ENCODE measurements at regions of chr12 and their contacts with region 1.

Region 1: DNA sequence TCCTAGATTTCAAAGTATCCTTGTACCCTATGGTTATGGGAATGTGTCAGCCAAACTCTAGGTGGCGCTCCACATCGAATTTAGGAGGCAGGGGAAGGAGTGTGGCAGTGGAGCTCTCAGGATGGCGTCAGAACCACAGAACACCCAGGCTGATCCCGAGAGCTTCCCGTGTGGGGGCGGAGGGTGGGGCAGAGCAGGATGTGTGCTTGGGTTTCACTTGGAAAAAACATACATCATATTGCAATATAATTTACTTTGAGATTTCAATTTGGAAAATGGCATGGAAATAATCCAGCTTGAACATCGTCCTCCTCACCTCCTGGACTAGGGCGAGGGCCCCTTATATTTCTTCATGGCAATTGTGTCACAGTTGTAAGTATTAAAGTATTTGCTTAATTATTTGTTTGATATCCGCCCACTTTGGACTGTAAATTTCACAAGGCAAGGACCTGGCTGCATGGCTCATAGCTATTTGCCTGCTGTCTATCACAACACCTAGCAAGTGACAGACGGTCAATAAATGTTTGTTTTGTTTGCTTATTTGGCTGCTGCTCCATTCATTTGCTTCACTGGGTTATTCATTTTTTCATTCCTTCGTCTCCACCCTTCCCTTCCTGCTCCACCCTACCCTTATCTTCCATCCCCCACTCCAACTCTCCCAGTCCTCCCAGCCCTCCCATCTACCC is 221.5 kb upstream of the HMGA2 start:
- DNase-seq: peak; percentile 97
- H3K4me3 Mint-ChIP-seq: peak overlapping the region; percentile 81
- H3K27ac Mint-ChIP-seq: peak overlapping the region; percentile 42
- H3K4me1 Mint-ChIP-seq: peaks cover 46% of the 10 kb centered on the region
- H3K27me3 Mint-ChIP-seq: no peaks in the 10 kb centered on the region
- CTCF ChIP-seq: peak; percentile 67

Region 2: GRCh38 chr12:65565601-65566560 is 36.9 kb before region 1 on chr12:
- CTCF ChIA-PET with region 1: interaction called, 21 read pairs
- POLR2A ChIA-PET with region 1: interaction called, 7 read pairs
- intact Hi-C with region 1: no loop called
- DNase-seq: peak; percentile 54
- H3K4me3 Mint-ChIP-seq: no peak overlapping the region
- H3K27ac Mint-ChIP-seq: peak overlapping the region; percentile 75
- H3K4me1 Mint-ChIP-seq: peaks cover 30% of the 10 kb centered on the region
- H3K27me3 Mint-ChIP-seq: no peaks in the 10 kb centered on the region
- CTCF ChIP-seq: no peak

Region 3: GRCh38 chr12:65649126-65649525 is 46.4 kb after region 1 on chr12:
- CTCF ChIA-PET with region 1: interaction called, 18 read pairs
- POLR2A ChIA-PET with region 1: interaction called, 25 read pairs
- intact Hi-C with region 1: no loop called
- DNase-seq: peak; percentile 98
- H3K4me3 Mint-ChIP-seq: peak overlapping the region; percentile 41
- H3K27ac Mint-ChIP-seq: peak overlapping the region; percentile 92
- H3K4me1 Mint-ChIP-seq: peaks cover 26% of the 10 kb centered on the region
- H3K27me3 Mint-ChIP-seq: no peaks in the 10 kb centered on the region
- CTCF ChIP-seq: no peak

Region 4: GRCh38 chr12:65695113-65695865 is 92.5 kb after region 1 on chr12:
- CTCF ChIA-PET with region 1: interaction called, 13 read pairs
- POLR2A ChIA-PET with region 1: interaction called, 9 read pairs
- intact Hi-C with region 1: loop called (anchors 2 kb)
- DNase-seq: peak; percentile 96
- H3K4me3 Mint-ChIP-seq: peak overlapping the region; percentile 34
- H3K27ac Mint-ChIP-seq: peak overlapping the region; percentile 70
- H3K4me1 Mint-ChIP-seq: peaks cover 37% of the 10 kb centered on the region
- H3K27me3 Mint-ChIP-seq: no peaks in the 10 kb centered on the region
- CTCF ChIP-seq: no peak

Region 5: GRCh38 chr12:65881965-65882413 is 279.2 kb after region 1 on chr12:
- CTCF ChIA-PET with region 1: interaction called, 38 read pairs
- POLR2A ChIA-PET with region 1: interaction called, 3 read pairs
- intact Hi-C with region 1: loop called (anchors 2 kb)
- DNase-seq: no peak
- H3K4me3 Mint-ChIP-seq: no peak overlapping the region
- H3K27ac Mint-ChIP-seq: peak overlapping the region; percentile 80
- H3K4me1 Mint-ChIP-seq: peaks cover 55% of the 10 kb centered on the region
- H3K27me3 Mint-ChIP-seq: no peaks in the 10 kb centered on the region
- CTCF ChIP-seq: no peak

Region 6: GRCh38 chr12:66087365-66087943 is 484.7 kb after region 1 on chr12:
- CTCF ChIA-PET with region 1: interaction called, 6 read pairs
- POLR2A ChIA-PET with region 1: interaction called, 5 read pairs
- intact Hi-C with region 1: loop called (anchors 5 kb)
- DNase-seq: peak; percentile 79
- H3K4me3 Mint-ChIP-seq: no peak overlapping the region
- H3K27ac Mint-ChIP-seq: no peak overlapping the region
- H3K4me1 Mint-ChIP-seq: peaks cover under 1% of the 10 kb centered on the region
- H3K27me3 Mint-ChIP-seq: no peaks in the 10 kb centered on the region
- CTCF ChIP-seq: peak; percentile 72

Measured in MCF 10A (cell line).